GM10248 (cell line): ENCODE measurements at regions of chr16 and their contacts with region 1.

Region 1: DNA sequence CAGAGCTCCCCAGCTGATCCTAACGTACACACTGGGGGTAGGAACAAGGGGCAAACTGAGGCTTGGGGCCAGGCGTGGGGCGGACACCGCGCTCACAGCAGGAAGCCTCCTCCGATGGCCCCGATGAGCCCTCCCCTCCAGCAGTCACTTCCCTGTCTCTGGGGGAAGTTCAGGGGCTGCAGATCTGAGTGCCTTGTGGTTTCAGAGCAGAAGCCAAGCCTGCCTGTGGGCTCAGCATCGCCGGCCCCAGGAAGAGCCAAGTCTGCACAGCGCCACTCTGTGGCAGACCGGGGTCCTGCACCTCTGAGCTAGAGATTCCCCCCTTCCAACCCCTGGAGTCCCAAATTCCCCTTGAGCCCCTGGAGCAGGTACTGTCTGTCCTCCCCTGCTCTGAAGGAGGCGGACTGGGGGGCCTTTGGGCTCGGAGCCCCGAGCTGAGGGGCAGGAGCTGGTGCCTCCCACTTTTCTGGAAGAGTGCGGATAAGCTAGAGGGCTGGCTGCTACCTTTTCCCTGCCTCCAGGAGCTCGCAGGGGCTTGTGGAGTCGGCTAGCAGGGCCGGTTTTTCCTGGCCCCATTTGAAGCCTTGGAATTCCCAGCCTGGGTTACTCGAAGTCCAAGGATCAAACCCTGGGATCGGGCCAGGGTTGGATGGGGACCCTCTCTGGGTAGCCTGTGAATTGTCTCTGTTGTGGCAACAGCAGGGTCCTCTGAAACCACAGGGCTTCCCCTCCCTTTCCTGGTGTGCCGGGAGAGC is 2.9 kb downstream of the GSE1 start:
- DNase-seq: peak; percentile 91
- CTCF ChIP-seq: peak; percentile 93

Region 2: GRCh38 chr16:85114909-85115567 is 501.0 kb before region 1 on chr16:
- CTCF ChIA-PET with region 1: interaction called, 12 read pairs
- POLR2A ChIA-PET with region 1: no interaction called
- DNase-seq: peak; percentile 93
- CTCF ChIP-seq: peak; percentile 98

Region 3: DNA sequence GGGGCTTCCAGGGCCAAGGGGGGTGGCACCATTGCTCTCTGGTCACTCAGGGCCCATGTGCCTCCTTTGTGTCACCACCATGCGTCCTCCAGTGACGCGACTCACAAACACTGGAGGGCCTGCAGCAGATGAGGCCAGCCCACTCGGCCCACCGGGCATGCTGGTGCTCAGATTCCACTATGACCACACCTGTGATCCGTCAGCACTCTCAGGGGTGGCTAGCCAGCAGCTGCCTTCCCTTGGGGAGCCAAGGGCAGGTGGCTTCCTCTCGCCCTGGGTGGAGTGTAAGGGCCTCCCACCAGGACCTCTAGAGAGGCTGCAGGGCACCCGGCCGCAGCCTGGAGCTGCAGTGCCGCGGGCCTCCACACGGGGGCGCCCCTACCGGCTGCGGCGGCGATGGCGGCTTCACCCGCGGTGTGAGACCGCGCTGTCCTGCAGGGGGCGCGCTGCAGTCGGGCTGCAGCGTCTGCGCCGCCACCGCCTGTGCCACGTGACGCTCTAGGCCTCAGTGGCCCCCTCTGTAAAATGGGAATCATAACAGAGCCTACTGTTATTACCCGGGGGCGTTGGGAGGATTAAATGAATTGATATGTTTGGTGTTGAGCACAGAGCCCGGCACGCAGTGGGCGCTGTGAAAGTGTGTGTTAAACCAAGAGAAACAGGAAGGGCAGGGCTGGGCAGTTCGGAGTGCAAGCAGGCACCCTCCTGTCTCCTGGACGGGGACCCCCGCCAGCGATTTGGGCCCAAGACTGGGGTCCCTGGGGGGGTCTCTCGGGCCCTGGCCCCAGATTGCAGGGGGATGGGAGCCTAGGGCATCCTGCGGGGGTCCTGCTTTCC is 195.3 kb before region 1 on chr16:
- CTCF ChIA-PET with region 1: interaction called, 71 read pairs
- POLR2A ChIA-PET with region 1: no interaction called
- DNase-seq: peak; percentile 91
- CTCF ChIP-seq: peak; percentile 100

Region 4: GRCh38 chr16:85491058-85491771 is 124.8 kb before region 1 on chr16:
- CTCF ChIA-PET with region 1: interaction called, 35 read pairs
- POLR2A ChIA-PET with region 1: no interaction called
- DNase-seq: peak; percentile 79
- CTCF ChIP-seq: peak; percentile 69

Region 5: DNA sequence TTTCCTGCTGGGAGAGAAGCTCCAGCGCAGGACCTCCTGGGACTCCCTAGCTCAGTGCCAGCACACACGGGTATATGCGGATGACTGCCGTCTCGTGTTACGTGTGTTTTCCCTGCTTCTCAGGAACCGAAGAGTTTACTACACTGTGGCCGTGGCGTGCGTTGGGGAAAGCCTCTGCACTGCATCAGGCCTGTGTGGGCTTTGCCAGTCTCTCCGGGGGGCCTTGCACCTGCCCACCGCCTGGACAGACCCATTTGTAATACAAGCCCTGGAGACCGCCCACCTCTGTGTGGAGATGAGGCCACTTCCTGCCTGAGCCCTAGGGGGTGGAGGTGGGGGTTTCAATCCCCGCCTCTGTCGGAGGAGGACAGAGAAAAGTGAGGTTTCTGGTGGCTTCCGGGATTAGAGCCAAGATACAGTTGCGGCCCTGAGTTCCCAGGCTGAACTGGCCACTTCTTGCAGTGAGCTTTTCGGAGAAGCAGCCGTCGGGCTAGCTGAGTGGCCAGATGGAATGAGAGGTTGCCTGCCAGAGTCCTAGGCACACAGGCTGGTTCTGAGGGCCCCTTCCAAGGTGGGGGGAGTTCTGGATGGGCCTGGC is 46.3 kb before region 1 on chr16:
- CTCF ChIA-PET with region 1: interaction called, 25 read pairs
- POLR2A ChIA-PET with region 1: interaction called, 4 read pairs
- DNase-seq: peak; percentile 90
- CTCF ChIP-seq: no peak

Region 6: GRCh38 chr16:85637808-85638647 is 22.0 kb after region 1 on chr16:
- CTCF ChIA-PET with region 1: interaction called, 12 read pairs
- POLR2A ChIA-PET with region 1: no interaction called
- DNase-seq: no peak
- CTCF ChIP-seq: no peak

Region 7: DNA sequence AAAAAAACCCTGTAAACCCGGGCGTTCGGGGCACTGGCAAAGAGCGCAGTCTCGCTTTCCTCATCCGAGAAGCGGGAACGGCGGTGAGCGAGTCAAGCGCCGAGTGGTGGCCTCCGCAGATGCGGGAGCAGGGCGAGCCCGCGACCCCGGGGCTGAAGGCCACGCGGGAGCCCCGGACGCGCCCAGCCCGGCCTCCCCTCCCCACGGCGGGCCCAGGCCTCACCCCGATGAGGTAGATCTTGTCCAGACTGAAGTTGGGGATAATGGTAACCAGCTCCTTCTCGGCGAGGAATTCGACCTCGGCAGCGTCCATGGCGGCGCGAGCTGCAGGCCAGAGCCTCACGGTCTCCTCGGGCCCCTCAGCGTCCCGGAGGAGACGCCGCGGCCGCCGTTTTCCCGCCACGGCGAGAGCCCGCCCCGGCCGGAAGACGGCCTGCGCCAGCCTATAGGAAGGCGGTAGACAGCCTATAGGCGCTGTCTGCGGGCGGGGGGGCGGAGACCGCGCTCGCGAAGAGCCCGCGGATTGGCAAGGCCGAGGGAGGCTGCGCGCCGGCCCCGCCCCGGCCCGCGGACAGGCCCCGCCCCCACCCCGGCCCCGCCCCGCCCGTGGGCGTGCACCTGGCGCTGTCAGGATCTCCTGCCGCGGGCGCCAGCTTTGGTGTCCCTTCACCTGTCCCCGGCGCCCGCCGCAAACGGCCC is 72.7 kb after region 1 on chr16 and contains the start of gene GINS2:
- CTCF ChIA-PET with region 1: interaction called, 14 read pairs
- POLR2A ChIA-PET with region 1: interaction called, 3 read pairs
- DNase-seq: peak; percentile 100
- CTCF ChIP-seq: no peak